H1 (cell line): ENCODE measurements at regions of chr3 and their contacts with region 1.

Region 1: DNA sequence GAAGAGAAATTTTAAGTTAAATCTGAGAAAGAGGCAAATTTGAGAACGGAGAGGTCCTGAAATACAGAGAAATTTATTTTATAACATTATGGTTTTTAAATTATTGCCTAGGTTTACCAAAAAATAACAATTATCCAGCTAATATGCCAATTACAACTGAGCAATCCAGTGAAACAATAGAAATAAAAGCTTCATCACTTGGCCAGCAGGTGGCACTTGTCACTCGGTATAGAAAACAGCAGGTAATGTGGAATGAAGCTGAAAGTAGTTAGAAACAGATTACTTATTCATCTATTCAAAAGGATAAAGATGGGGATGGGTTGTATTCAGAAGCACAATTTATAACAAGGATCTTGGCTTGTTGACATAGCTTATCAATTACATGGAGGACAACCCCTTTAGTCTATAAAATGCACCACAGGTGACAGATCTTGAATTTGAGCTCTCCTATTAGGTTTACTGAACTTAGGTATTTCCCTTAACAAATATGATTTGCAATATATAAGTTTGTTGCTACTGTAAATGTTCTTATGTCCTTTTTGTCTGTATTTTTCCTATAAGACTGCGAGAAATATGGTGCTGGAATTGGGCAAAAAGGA is 70.1 kb upstream of the GUCA1C start:
- DNase-seq: no peak
- H3K4me3 ChIP-seq: no peak overlapping the region
- H3K27ac ChIP-seq: no peak overlapping the region
- H3K4me1 ChIP-seq: no peaks in the 10 kb centered on the region
- H3K27me3 ChIP-seq: no peaks in the 10 kb centered on the region
- CTCF ChIP-seq: peak in 2 of 3 experiments; percentile 62 to 69; a peak in 3 of 4 replicates
- EP300 ChIP-seq: no peak
- POLR2A ChIP-seq: no peak
- RAD21 ChIP-seq: peak; percentile 73 to 80

Region 2: GRCh38 chr3:108970561-108970960 is 53.2 kb before region 1 on chr3:
- CTCF ChIA-PET with region 1: interaction called, 11 read pairs
- POLR2A ChIA-PET with region 1: no interaction called
- DNase-seq: no peak
- H3K4me3 ChIP-seq: no peak overlapping the region
- H3K27ac ChIP-seq: no peak overlapping the region
- H3K4me1 ChIP-seq: no peaks in the 10 kb centered on the region
- H3K27me3 ChIP-seq: no peaks in the 10 kb centered on the region; a peak in 1 of 7 replicates
- CTCF ChIP-seq: no peak
- EP300 ChIP-seq: no peak
- POLR2A ChIP-seq: no peak
- RAD21 ChIP-seq: no peak

Region 3: GRCh38 chr3:109045271-109046040 is 21.7 kb after region 1 on chr3:
- CTCF ChIA-PET with region 1: interaction called, 11 read pairs
- POLR2A ChIA-PET with region 1: no interaction called
- DNase-seq: no peak
- H3K4me3 ChIP-seq: no peak overlapping the region
- H3K27ac ChIP-seq: no peak overlapping the region
- H3K4me1 ChIP-seq: peaks cover 0 to 6% (median 2%) of the 10 kb centered on the region in 4 experiments; a peak in 4 of 7 replicates
- H3K27me3 ChIP-seq: no peaks in the 10 kb centered on the region
- CTCF ChIP-seq: no peak
- EP300 ChIP-seq: no peak
- POLR2A ChIP-seq: no peak
- RAD21 ChIP-seq: no peak

Region 4: GRCh38 chr3:109081746-109082510 is 58.2 kb after region 1 on chr3:
- CTCF ChIA-PET with region 1: interaction called, 79 read pairs
- POLR2A ChIA-PET with region 1: no interaction called
- DNase-seq: peak; percentile 31 to 62
- H3K4me3 ChIP-seq: no peak overlapping the region
- H3K27ac ChIP-seq: no peak overlapping the region
- H3K4me1 ChIP-seq: peaks cover 0 to 3% (median 0%) of the 10 kb centered on the region in 4 experiments; a peak in 3 of 7 replicates
- H3K27me3 ChIP-seq: no peaks in the 10 kb centered on the region
- CTCF ChIP-seq: peak in 2 of 3 experiments; percentile 64 to 80; a peak in 3 of 4 replicates
- EP300 ChIP-seq: no peak
- POLR2A ChIP-seq: no peak
- RAD21 ChIP-seq: peak; percentile 90 to 95

Region 5: GRCh38 chr3:109184726-109185125 is 161.0 kb after region 1 on chr3:
- CTCF ChIA-PET with region 1: no interaction called
- POLR2A ChIA-PET with region 1: no interaction called
- DNase-seq: no peak
- H3K4me3 ChIP-seq: no peak overlapping the region
- H3K27ac ChIP-seq: no peak overlapping the region
- H3K4me1 ChIP-seq: peaks cover 0 to 2% (median 0%) of the 10 kb centered on the region in 4 experiments; a peak in 2 of 7 replicates
- H3K27me3 ChIP-seq: no peaks in the 10 kb centered on the region
- CTCF ChIP-seq: no peak
- EP300 ChIP-seq: no peak
- POLR2A ChIP-seq: no peak
- RAD21 ChIP-seq: no peak

Region 6: GRCh38 chr3:109224333-109224732 is 200.6 kb after region 1 on chr3:
- CTCF ChIA-PET with region 1: interaction called, 16 read pairs
- POLR2A ChIA-PET with region 1: no interaction called
- DNase-seq: peak; percentile 36 to 77
- H3K4me3 ChIP-seq: no peak overlapping the region
- H3K27ac ChIP-seq: no peak overlapping the region
- H3K4me1 ChIP-seq: no peaks in the 10 kb centered on the region
- H3K27me3 ChIP-seq: no peaks in the 10 kb centered on the region
- CTCF ChIP-seq: peak; percentile 77 to 92 (median 89)
- EP300 ChIP-seq: no peak
- POLR2A ChIP-seq: no peak
- RAD21 ChIP-seq: peak; percentile 83 to 87